Endothelial cell of umbilical vein (primary cell): ENCODE measurements at regions of chr4 and their contacts with region 1.

Region 1: DNA sequence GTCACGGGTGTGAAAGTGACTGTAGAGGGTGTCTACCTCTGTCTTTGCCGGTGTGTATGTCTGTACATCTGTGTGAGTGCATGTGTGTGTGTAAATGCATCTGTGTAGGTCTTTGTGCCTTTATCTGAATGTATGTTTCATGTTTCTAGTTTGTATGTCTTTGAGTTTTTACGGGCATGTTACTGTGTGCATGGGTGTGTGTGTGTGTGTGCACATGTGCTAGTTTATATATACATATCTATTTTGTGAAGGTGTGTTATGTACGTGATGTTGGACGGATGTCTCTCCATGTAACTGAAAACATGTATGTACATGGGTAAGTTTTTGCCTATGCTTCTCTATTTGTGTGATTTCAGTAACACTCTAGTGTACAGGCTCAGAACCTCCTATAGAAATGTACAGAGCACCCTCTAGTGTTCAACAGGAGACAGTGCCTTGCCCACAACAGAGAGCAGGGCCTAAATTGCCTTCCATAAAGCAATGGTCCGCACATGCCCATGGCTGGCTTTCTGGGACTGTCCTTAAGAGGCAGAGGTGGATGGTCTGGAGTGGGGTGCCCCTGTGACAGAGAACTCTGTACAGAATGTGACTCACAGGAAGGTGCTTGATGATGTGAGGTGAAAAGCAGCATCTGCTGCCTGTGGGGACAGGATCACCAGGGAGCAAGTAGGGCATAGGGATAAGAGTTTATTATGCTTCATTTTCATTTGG is 343.5 kb downstream of the RAPGEF2 start:
- DNase-seq: peak; percentile 76
- H3K4me3 ChIP-seq: no peak overlapping the region
- H3K27ac ChIP-seq: no peak overlapping the region
- H3K4me1 ChIP-seq: no peaks in the 10 kb centered on the region
- H3K27me3 ChIP-seq: no peaks in the 10 kb centered on the region
- CTCF ChIP-seq: peak; percentile 78 to 81
- POLR2A ChIP-seq: no peak

Region 2: DNA sequence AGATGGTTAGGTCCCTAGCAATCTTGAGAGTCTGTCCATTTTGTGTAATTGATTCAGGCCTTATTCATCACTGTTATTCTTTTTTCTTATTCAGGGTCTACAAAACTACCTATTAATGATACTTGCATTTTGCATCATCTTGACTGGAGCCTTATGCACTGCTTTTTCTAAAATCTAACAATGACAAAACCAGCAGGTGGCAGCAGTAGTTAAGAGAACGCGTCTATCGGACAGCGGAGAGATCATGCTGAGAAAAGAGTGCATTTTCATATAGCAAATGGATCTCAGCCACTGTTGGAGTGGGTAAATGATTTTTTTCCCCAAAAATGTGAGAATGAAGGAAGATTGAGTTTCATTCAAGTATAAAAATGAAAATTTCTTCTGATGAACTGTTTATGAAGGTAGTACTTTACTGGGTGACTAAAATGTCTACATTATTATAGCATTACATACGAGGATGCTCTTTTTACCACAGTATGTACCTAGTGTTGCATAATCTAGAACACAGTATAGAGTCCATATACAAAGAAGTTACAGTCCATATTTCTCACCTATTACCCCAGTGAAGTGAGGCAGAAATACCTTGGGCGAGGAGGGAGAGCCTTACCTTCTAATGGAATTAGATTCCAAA is 1193.0 kb before region 1 on chr4:
- CTCF ChIA-PET with region 1: no interaction called
- POLR2A ChIA-PET with region 1: no interaction called
- dilution Hi-C with region 1: no loop called
- intact Hi-C with region 1: loop called (anchors 10 kb)
- DNase-seq: peak; percentile 71
- H3K4me3 ChIP-seq: no peak overlapping the region
- H3K27ac ChIP-seq: no peak overlapping the region
- H3K4me1 ChIP-seq: no peaks in the 10 kb centered on the region
- H3K27me3 ChIP-seq: no peaks in the 10 kb centered on the region
- CTCF ChIP-seq: peak; percentile 60
- POLR2A ChIP-seq: no peak

Region 3: DNA sequence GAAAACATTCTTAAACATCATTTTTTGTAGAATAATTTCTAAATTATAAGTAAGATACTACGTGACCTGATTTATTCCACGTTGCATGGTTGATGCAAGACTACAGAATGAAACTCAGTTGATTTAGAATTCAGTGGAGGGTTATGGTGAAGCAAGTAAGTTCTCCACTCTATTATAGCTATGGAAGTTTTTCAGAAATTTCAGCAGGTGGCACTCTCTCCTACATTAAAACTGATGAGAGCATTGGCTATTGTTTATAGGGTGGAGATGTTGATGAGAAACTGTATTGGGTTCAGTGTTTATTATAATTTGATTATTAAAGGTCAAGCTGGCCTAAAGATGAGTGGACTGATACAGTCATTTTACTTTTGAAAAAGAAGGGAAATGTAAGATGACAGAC is 589.6 kb before region 1 on chr4:
- CTCF ChIA-PET with region 1: interaction called, 4 read pairs
- POLR2A ChIA-PET with region 1: no interaction called
- dilution Hi-C with region 1: no loop called
- intact Hi-C with region 1: loop called (anchors 1 kb)
- DNase-seq: peak; percentile 70
- H3K4me3 ChIP-seq: no peak overlapping the region
- H3K27ac ChIP-seq: no peak overlapping the region
- H3K4me1 ChIP-seq: no peaks in the 10 kb centered on the region
- H3K27me3 ChIP-seq: no peaks in the 10 kb centered on the region
- CTCF ChIP-seq: peak; percentile 19 to 43
- POLR2A ChIP-seq: no peak

Region 4: GRCh38 chr4:159206427-159206871 is 240.0 kb before region 1 on chr4:
- CTCF ChIA-PET with region 1: interaction called, 3 read pairs
- POLR2A ChIA-PET with region 1: no interaction called
- dilution Hi-C with region 1: no loop called
- intact Hi-C with region 1: loop called (anchors 1 kb)
- DNase-seq: peak; percentile 73
- H3K4me3 ChIP-seq: no peak overlapping the region
- H3K27ac ChIP-seq: no peak overlapping the region
- H3K4me1 ChIP-seq: peaks cover 27% of the 10 kb centered on the region
- H3K27me3 ChIP-seq: no peaks in the 10 kb centered on the region
- CTCF ChIP-seq: no peak
- POLR2A ChIP-seq: no peak

Region 5: DNA sequence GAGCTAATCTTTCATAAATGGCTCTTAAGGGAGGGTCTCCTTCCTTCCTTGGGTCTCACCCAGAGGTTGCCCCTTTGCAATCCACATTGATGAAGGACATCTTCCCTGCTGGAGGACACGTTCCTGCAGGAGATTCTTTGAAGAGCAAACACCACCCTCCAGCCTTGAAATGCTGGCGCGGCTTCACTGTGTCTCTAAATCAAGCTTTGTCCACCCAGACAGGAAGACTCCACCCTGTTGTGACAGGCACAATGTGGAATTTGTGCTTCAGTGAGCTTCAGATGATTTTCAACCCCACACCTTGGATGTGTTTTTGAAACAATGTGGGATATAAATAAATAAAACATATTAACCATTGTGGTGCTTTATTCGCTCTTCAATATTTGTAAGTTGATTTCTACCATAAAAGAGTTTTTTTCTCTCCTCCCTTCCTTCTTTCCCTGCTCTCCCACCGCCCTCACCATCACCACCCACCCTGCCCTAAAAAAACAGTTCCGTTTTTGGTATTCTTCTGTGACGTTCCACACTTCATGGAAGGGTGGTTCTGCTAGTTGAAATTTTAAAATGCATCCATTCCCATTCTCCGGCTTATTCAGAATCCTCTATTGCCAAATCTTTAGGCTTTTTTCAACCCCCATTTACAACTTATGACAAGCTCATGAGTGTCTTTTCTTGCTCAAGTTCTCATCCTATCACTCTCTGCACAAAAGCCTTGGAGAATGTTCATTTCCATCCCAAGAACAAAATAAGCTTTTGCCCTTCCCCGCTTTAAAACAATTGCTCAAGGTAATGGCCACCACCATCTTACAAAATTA is 79.2 kb before region 1 on chr4:
- CTCF ChIA-PET with region 1: no interaction called
- POLR2A ChIA-PET with region 1: no interaction called
- dilution Hi-C with region 1: no loop called
- intact Hi-C with region 1: loop called (anchors 5 kb)
- DNase-seq: peak; percentile 23
- H3K4me3 ChIP-seq: no peak overlapping the region
- H3K27ac ChIP-seq: no peak overlapping the region
- H3K4me1 ChIP-seq: peaks cover 8% of the 10 kb centered on the region
- H3K27me3 ChIP-seq: no peaks in the 10 kb centered on the region
- CTCF ChIP-seq: no peak
- POLR2A ChIP-seq: no peak